Pancreas (tissue), 10 donors: ENCODE measurements at regions of chr15 and their contacts with region 1.

Region 1: DNA sequence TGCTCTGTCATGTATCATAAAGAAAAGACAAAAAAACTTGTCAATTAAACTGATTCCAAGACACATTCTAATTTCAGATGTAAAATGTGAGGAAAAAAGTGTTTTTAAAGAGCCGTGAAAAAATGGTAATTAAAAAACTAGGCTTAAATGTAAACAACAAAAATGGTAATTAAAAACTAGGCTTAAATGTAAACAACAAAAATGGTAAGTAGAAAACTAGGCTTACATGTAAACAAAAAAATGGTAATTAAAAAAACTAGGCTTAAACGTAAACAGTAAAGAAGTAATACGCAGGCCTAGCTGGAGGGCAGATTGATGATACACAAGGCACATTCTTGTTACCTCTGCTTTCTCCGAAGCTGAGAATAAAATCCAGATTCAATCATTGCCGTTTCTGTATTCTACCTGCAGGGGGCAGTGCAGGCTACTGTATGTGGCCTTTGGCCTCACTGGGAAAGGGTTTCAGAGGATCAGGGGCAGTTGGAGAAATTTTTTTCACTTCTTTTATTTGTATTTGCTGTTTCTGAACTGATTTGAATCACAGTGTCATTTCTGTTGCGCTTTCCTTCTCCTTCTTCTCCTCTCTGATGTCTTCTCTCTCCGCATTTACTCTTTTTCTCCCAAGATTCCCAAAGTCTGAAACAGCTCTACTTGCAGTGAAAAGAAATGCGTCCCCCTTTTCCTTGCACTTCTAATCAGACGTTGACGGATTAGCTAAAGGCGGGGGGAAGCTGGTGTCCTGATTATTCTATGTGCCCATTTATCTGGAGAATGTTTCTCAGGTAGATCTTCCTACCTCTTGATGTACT is 67.2 kb upstream of the MCTP2 start:
- DNase-seq: peak in 5 of 6 donors; percentile 25 to 69 (median 47)
- ATAC-seq: peak; percentile 60 to 96 (median 90)
- H3K4me3 ChIP-seq: no peak overlapping the region
- H3K27ac ChIP-seq: no peak overlapping the region
- H3K4me1 ChIP-seq: no peaks in the 10 kb centered on the region
- H3K27me3 ChIP-seq: no peaks in the 10 kb centered on the region
- CTCF ChIP-seq: peak; percentile 65 to 79 (median 76)

Region 2: GRCh38 chr15:94230956-94231722 is 66.9 kb after region 1 on chr15 and contains the start of gene MCTP2:
- intact Hi-C with region 1: no loop called
- DNase-seq: peak; percentile 88 to 96 (median 90)
- ATAC-seq: peak; percentile 93 to 96 (median 96)
- H3K4me3 ChIP-seq: peak within 1 kb of the TSS; percentile 71 to 84 (median 82)
- H3K27ac ChIP-seq: peak within 1 kb of the TSS; percentile 85 to 94 (median 89)
- H3K4me1 ChIP-seq: peaks cover 11 to 16% (median 15%) of the 10 kb centered on the region in 3 donors
- H3K27me3 ChIP-seq: no peaks in the 10 kb centered on the region
- CTCF ChIP-seq: no peak
- total RNA-seq, gene MCTP2: 13.0 to 21.4 (median 15.0) TPM

Region 3: DNA sequence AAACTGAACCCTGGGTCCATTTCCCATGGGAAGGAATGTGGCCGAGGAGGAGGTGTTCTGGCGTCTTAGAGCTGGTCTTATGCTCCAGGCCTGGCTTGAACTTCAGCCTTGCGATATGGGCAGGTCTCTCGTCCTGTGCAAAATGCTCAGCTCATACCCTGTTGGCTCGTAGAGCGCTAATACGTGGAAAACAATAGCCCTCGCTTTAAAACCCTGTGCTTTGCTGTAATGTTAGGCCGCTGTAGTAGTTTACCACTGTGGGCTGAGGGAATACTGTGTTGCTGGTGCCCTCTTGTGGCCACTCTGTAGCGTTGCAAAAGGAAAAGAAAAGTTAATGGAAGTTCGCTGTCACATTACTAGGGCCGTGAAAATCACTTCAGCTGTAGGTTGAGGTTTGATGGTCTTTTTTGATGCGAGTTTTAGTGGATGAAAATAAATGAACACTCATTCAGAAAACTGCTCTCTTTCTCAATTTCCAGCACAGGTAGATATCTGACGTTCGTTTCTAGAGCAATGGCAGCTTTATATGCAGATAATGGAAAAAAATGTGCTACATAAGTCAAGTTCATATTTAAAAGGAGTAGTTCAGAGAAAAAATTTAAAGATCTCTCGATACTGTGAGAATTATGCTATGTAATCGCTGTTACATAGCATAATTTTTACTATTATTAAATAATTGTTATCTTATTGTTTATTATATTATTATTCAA is 160.1 kb after region 1 on chr15:
- intact Hi-C with region 1: loop called (anchors 5 to 10 kb)
- DNase-seq: peak in 3 of 6 donors; percentile 20 to 62 (median 43)
- ATAC-seq: peak; percentile 82 to 98 (median 95)
- H3K4me3 ChIP-seq: no peak overlapping the region
- H3K27ac ChIP-seq: no peak overlapping the region
- H3K4me1 ChIP-seq: no peaks in the 10 kb centered on the region
- H3K27me3 ChIP-seq: no peaks in the 10 kb centered on the region
- CTCF ChIP-seq: peak; percentile 73 to 87 (median 86)